Transverse colon (tissue), 4 donors: ENCODE measurements at regions of chr3 and their contacts with region 1.

Region 1: GRCh38 chr3:71955240-71956068 is 170.5 kb upstream of the PROK2 start:
- DNase-seq: peak; percentile 71
- H3K4me3 ChIP-seq: no peak overlapping the region
- H3K27ac ChIP-seq: no peak overlapping the region
- H3K4me1 ChIP-seq: peaks cover 0 to 10% (median 4%) of the 10 kb centered on the region in 4 donors
- H3K27me3 ChIP-seq: no peaks in the 10 kb centered on the region
- CTCF ChIP-seq: peak; percentile 62 to 75 (median 66)
- EP300 ChIP-seq: no peak
- POLR2A ChIP-seq: no peak

Region 2: GRCh38 chr3:71616571-71617101 is 338.8 kb before region 1 on chr3:
- in situ Hi-C with region 1: no loop called
- intact Hi-C with region 1: no loop called
- DNase-seq: no peak
- H3K4me3 ChIP-seq: no peak overlapping the region
- H3K27ac ChIP-seq: no peak overlapping the region
- H3K4me1 ChIP-seq: no peaks in the 10 kb centered on the region
- H3K27me3 ChIP-seq: no peaks in the 10 kb centered on the region
- CTCF ChIP-seq: no peak
- EP300 ChIP-seq: no peak
- POLR2A ChIP-seq: no peak

Region 3: GRCh38 chr3:72270072-72270681 is 314.7 kb after region 1 on chr3:
- in situ Hi-C with region 1: loop called in 1 of 4 experiments (anchors 25 kb)
- intact Hi-C with region 1: no loop called
- DNase-seq: peak; percentile 84
- H3K4me3 ChIP-seq: no peak overlapping the region
- H3K27ac ChIP-seq: peak overlapping the region; percentile 23 to 52 (median 38)
- H3K4me1 ChIP-seq: peaks cover 18 to 44% (median 27%) of the 10 kb centered on the region in 4 donors
- H3K27me3 ChIP-seq: no peaks in the 10 kb centered on the region
- CTCF ChIP-seq: no peak
- EP300 ChIP-seq: peak; percentile 14
- POLR2A ChIP-seq: no peak